Mammary epithelial cell (primary cell): ENCODE measurements at regions of chr10 and their contacts with region 1.

Region 1: GRCh38 chr10:84783386-84783785 is 455.0 kb downstream of the CCSER2 start:
- DNase-seq: peak; percentile 24
- H3K4me3 ChIP-seq: no peak overlapping the region
- H3K27ac ChIP-seq: no peak overlapping the region
- H3K4me1 ChIP-seq: no peaks in the 10 kb centered on the region
- H3K27me3 ChIP-seq: no peaks in the 10 kb centered on the region
- CTCF ChIP-seq: peak; percentile 82 to 90

Region 2: DNA sequence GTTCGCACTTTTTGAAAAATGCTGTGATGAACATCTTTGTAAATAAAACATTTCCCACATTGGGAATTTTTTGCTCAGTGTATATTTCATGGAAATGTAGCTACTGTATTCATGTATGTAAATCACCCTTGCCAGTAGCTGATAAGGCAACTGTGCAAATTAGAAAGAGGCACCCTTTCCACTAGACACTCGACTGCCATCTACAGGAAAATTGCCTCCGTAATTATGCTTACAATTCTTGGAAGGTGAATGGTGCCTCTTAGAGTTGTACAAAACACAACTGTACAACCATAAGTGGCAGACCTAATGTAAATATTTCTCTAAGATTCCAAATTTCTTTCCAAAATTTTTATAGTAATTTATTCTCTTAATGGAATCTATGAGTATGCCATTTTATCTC is 36.7 kb after region 1 on chr10:
- CTCF ChIA-PET with region 1: interaction called, 6 read pairs
- dilution Hi-C with region 1: no loop called
- in situ Hi-C with region 1: no loop called
- intact Hi-C with region 1: loop called (anchors 2 kb)
- DNase-seq: no peak
- H3K4me3 ChIP-seq: no peak overlapping the region
- H3K27ac ChIP-seq: no peak overlapping the region
- H3K4me1 ChIP-seq: peaks cover 17% of the 10 kb centered on the region
- H3K27me3 ChIP-seq: peaks cover 3% of the 10 kb centered on the region
- CTCF ChIP-seq: peak; percentile 11 to 41